Dorsolateral prefrontal cortex (tissue), 120 donors: ENCODE measurements at regions of chr12 and their contacts with region 1.

Region 1: DNA sequence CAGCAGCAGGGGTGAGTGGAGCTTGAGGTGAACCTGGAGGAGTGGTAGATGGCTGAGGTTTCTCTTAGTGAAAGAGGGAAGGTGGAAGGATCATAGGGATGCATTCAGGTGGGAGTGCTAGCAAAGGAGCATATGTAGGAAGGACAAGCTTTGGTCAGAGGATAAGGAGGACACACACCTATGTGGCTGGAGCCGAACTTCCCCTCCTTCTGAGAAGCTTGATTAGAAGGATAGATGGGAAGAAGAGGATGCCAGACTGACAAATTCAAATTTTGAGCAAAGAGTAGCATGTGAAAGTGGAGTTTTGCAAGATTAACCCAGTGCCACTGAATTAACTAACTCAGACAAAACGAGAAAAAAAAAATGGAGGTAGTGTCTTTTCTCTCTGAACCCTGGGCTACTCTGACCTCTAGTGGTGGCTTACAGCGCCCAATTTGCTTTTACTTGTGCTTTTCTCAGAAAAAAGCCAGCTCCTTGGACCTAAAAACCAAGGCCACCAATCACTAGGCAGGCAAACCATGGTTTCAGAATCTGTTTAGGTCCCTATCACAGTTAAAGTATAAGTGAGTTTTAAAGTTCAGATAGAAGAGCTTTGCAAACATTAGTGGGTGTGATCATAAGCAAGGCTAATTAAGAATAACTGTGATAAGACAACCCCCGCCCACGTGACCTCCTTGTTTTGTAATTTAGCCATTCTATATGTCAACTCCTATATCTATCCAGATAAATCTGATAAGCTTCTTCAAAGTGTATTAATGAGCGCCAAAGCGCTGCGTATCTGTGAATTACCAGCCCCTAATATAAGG is 15.5 kb downstream of the EMP1 start:
- DNase-seq: peak in 6 of 10 donors; percentile 44 to 78 (median 56)
- H3K4me3 ChIP-seq: peak overlapping the region in 15 of 59 donors; percentile 1 to 44 (median 19)
- H3K27ac ChIP-seq: peak overlapping the region in 8 of 59 donors; percentile 7 to 57 (median 40)
- H3K27me3 ChIP-seq: no peaks in the 10 kb centered on the region
- CTCF ChIP-seq: peak; percentile 72 to 96 (median 90)

Region 2: DNA sequence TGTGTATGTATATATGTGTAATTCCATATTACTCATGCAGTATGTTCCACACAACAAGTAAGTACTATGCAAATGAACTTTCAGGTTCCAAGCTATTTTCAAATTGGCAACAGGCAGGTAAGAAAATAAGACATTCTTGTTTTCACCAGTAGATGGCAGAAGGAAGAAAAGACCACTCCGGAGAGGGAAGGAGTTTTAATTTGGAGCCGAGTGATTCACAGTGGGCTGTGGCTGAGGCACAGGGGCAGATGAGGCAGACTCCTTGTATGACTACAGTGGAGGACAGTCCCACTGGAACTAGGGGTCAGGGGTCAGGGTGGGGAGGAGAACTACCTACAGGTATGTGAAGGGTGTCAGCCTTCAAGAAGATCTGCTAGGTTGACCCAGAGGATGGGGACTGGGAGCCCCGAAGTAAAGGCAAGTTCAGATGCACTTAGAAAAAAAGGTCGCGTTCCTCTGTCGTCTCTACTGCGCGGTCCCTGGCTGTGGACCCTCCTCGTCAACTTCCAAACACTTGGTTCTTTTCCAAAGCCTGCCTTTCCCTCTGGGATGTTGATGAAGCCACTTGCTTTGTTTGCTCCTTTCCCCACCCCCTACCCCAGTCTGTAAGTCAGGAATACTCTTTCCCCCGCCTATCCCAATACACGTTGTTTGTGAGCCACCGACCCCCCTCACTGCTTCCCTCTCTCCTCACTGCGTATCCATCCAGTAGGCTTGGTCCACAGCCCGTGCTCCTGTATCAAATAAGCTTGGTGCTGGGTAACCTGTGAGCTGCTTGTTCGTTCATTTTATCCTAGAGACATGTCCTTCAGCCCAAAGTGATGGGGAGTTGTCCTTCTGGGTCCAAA is 374.8 kb before region 1 on chr12:
- intact Hi-C with region 1: loop called in 1 of 2 experiments (anchors 10 kb)
- DNase-seq: peak in 2 of 10 donors; percentile 4 to 7
- H3K4me3 ChIP-seq: no peak overlapping the region
- H3K27ac ChIP-seq: no peak overlapping the region
- H3K27me3 ChIP-seq: no peaks in the 10 kb centered on the region
- CTCF ChIP-seq: peak in 54 of 56 donors; percentile 25 to 66 (median 50)

Region 3: DNA sequence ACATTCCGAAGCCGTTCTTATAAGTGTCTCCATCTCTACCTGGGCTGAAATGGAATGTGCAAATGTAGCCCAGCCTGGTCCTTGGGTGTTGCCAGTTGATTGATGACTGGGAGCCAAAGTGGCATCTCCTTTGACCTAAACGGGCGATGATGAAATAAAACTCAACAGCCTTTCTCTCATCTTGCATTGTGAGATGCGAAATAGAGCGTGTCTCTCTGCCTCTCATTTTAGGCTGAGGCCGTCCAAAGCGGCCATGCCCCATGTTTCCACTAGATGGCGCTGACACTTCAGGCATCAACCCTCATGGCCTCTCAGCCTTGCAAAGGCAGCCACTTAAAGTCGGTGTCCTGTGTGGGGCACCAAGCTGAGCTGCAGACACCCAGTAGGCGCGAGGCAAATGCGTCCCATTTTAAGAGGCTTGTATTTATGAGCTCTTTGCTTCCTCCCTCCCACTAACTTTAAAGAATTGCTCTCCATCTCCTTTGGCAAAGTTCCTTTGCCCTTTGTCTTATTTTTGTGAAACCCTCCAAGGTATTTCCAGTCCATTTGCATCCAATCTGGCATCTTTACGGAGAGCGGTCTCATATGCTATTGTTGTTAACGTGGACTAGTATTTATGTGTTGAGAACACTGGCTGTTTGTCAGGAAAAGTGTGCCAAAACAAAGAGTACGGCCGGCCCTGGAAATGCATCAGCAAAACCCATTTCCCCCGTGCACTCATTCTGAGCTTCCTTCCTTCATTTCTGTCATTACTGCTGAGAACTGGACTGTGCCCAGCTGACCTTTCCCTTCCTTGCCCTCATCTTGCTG is 295.7 kb before region 1 on chr12:
- intact Hi-C with region 1: loop called (anchors 2 kb)
- DNase-seq: peak; percentile 86 to 97 (median 93)
- H3K4me3 ChIP-seq: peak overlapping the region in 56 of 59 donors; percentile 0 to 61 (median 32)
- H3K27ac ChIP-seq: peak overlapping the region; percentile 3 to 96 (median 82)
- H3K27me3 ChIP-seq: no peaks in the 10 kb centered on the region
- CTCF ChIP-seq: peak; percentile 94 to 100 (median 99)

Region 4: GRCh38 chr12:13023811-13024530 is 188.1 kb before region 1 on chr12:
- intact Hi-C with region 1: loop called in 1 of 2 experiments (anchors 5 kb)
- DNase-seq: no peak
- H3K4me3 ChIP-seq: no peak overlapping the region
- H3K27ac ChIP-seq: no peak overlapping the region
- H3K27me3 ChIP-seq: no peaks in the 10 kb centered on the region
- CTCF ChIP-seq: peak in 20 of 56 donors; percentile 6 to 52 (median 22)

Region 5: DNA sequence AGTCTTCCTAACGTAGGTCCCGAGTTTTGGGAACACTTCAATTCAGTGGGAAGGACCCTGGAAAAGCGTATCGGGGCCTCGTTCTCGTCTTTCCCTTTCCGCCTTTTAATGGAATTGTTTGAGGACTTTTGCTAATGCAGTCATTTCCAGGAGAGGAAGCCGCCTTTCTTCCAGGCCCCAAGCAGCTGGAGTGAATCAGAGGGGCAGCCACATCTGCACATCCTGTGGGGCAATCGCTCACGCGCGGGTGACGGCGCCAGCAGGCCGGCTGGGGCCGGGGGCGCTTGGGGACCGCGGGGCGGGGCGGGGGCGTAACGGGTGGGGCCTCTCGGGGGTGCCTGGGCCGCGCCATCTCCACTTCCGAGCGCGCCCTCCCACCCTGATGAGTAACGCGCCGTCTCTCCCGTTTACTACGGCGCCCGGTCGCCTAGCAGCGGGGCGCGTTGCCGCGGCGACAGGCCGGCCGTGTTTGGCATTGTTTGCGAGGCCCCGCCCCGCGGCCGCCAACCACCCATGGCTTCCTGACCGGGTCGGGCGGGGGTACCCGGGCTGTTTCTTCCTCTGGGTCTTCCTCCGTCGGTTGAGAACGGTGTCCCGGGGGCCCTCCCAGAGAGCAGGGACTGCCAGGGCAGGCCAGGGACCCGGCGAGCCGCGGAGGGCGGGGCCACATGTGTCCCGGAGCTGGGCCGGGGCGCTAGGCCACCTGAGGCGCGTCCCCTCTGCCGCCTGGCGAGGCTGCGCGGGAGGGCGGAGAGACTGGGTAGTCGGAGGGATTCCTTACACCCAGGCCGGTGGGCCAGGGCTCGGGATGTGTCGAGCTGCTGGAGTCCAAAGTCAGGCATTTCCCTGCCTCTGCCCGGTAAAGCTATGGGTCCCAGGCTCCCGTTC is 110.9 kb before region 1 on chr12:
- intact Hi-C with region 1: loop called (anchors 1 to 2 kb)
- DNase-seq: peak; percentile 65 to 91 (median 80)
- H3K4me3 ChIP-seq: peak overlapping the region; percentile 49 to 88 (median 70)
- H3K27ac ChIP-seq: peak overlapping the region; percentile 81 to 99 (median 96)
- H3K27me3 ChIP-seq: no peaks in the 10 kb centered on the region
- CTCF ChIP-seq: peak in 19 of 56 donors; percentile 4 to 57 (median 18)

Region 6: GRCh38 chr12:13255792-13256691 is 44.0 kb after region 1 on chr12:
- intact Hi-C with region 1: no loop called
- DNase-seq: peak; percentile 77 to 96 (median 93)
- H3K4me3 ChIP-seq: peak overlapping the region; percentile 11 to 71 (median 50)
- H3K27ac ChIP-seq: peak overlapping the region in 49 of 59 donors; percentile 14 to 84 (median 64)
- H3K27me3 ChIP-seq: no peaks in the 10 kb centered on the region
- CTCF ChIP-seq: peak; percentile 92 to 99 (median 98)